Activated CD4-positive, alpha-beta T cell treated with anti-CD3 and anti-CD28 coated beads, Interleukin-2, amount 10 ng/mL, durations not matched to agents 24 days and 14 days (primary cell): ENCODE measurements at regions of chr7 and their contacts with region 1.

Region 1: GRCh38 chr7:35658602-35659201 is 36.2 kb downstream of the HERPUD2 start:
- DNase-seq: no peak
- H3K4me3 Mint-ChIP-seq: no peak overlapping the region
- H3K27ac Mint-ChIP-seq: no peak overlapping the region
- H3K4me1 Mint-ChIP-seq: peaks cover 21% of the 10 kb centered on the region
- H3K27me3 Mint-ChIP-seq: no peaks in the 10 kb centered on the region

Region 2: DNA sequence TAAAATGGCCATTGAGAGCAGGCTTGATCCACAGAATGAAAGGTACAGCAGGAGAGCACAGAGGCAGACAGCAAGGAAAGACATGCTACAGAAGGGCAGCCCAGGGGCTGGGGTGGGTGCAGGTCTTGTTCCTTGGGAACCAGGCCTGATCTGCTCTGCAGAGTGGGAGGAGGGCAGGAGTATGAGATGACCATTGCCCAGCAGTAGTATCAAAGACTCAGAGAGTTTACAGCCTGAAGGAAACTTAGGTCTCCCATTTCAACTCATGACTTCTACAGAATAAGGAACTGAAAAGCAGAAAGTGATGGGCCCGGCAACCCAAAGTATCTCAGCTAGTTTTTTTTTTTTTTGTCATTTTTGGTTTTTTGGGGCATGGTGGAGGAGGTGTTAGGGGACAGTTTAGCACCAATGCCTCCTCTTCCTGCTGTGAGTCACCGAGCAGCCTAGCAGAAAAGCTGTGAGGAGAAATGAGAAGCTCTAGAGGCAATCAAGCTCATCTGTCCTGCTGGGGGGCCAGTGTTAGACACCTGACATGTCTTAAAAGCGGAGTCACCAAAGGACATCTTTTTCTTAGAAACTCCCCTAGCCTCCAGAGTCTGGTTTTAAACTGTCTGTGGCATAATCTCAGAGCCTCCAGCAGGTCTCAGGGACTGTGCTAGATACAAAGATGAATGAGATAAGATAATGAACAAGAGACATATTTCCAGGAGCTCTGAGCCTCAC is 70.5 kb after region 1 on chr7:
- intact Hi-C with region 1: loop called (anchors 5 kb)
- DNase-seq: peak; percentile 74
- H3K4me3 Mint-ChIP-seq: peak overlapping the region; percentile 39
- H3K27ac Mint-ChIP-seq: peak overlapping the region; percentile 48
- H3K4me1 Mint-ChIP-seq: peaks cover 44% of the 10 kb centered on the region
- H3K27me3 Mint-ChIP-seq: peaks cover 11% of the 10 kb centered on the region